ENCODE measurements at regions of chr19 and their contacts with region 1.

Region 1: GRCh38 chr19:19865739-19866481 is at the start of gene ZNF253:
- DNase-seq: peak; percentile 93 to 95
- H3K4me3 ChIP-seq: peak within 1 kb of the TSS; percentile 70
- H3K4me3 Mint-ChIP-seq: peak within 1 kb of the TSS; percentile 100
- H3K27ac Mint-ChIP-seq: peak within 1 kb of the TSS; percentile 100
- H3K4me1 ChIP-seq: no peaks in the 10 kb centered on the region
- H3K4me1 Mint-ChIP-seq: peaks cover 8% of the 10 kb centered on the region
- H3K27me3 ChIP-seq: no peaks in the 10 kb centered on the region
- H3K27me3 Mint-ChIP-seq: no peaks in the 10 kb centered on the region
- CTCF ChIP-seq: no peak
- total RNA-seq, gene ZNF253: 6.4 and 7.1 TPM in 2 replicates

Region 2: DNA sequence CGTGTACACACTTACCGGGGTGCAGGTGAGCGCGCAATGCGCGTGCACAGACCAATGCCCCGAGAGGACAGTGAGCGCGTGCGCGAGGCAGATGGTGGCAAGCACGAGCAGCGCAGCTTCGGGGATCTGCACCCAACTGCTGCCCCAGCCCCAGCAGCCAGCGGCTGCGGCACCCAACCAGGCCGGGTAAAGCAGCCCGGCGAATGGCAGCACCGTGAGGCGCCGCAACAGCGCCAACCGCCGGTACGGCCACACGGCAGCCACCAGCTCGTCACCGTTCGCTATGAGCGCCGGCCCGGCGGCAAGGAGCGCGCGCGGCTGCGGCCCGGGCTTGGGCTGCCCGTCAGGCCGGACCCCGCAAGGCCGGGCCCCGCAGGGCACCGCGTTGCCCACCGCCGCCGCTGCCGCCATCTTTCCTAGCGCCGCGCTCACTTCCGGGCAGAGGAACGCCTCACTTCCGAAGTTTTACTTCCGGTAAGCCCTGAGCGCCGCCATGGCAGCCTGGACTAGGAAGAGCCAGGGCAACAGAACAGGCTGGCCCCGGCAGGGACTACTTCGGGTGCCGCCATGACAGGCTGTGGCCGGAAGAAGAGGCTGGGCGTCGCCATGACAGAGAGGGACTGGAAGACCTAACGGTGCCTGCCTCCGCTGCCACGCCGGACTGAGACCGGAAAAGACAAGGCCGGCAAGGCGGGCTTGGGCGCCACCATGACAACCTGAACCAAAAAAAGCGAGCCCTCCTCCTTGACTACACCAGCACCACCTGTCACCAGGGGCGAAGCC is 202.5 kb before region 1 on chr19 and contains the start of gene ATP13A1:
- CTCF ChIA-PET with region 1: no interaction called
- POLR2A ChIA-PET with region 1: interaction called, 10 read pairs
- intact Hi-C with region 1: loop called (anchors 10 kb)
- DNase-seq: peak; percentile 93 to 97
- H3K4me3 ChIP-seq: peak within 1 kb of the TSS; percentile 99
- H3K4me3 Mint-ChIP-seq: peak within 1 kb of the TSS; percentile 82
- H3K27ac Mint-ChIP-seq: peak within 1 kb of the TSS; percentile 93
- H3K4me1 ChIP-seq: no peaks in the 10 kb centered on the region; the same call in 1 of the 2 replicates
- H3K4me1 Mint-ChIP-seq: no peaks in the 10 kb centered on the region
- H3K27me3 ChIP-seq: no peaks in the 10 kb centered on the region
- H3K27me3 Mint-ChIP-seq: no peaks in the 10 kb centered on the region
- CTCF ChIP-seq: no peak
- total RNA-seq, gene ATP13A1: 83.0 and 93.1 TPM in 2 replicates

Region 3: DNA sequence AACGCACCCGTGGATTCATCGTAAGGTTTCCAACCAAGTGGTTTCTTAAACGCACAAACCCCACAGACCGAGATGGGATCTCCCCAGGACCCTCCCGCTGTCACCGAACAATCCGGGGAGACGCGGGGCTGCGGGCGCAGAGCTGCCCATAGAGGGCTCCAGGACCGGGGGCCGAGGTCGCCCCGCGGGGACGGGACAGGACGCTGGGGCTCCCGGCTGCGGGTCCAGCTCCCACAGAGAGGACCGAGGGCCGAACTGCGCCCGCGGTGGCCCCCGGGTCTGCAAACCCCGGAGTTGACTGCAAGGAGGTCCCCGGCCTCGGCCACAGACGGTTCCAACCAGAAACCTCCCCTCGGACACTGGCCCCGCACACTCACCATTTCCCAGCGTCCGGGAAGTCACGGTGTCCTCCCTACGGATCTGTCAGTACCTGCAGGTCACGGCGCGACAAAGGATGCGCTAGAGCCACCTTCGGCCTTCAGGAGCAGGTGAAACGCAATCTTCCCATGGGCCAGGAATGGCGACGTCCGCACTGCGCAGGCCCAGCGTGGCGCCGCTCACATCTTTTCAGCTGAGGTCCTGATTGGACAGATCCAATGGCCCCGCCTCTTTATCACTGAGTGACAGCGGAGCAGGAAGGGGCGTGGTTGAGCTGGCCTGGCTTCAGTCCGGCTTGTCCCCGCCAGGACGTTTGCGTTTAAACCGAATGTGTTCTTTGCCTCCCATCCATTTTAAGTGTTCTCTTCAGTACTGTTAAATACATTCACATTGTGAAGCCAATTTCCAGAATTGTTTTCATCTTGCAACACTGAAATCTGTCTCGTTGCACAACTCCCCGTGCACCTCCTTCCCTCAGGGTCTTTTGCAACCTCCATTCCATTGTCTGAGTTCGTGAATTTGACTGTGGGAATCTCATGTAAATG is 133.1 kb before region 1 on chr19 and contains the start of gene ZNF14:
- CTCF ChIA-PET with region 1: no interaction called
- POLR2A ChIA-PET with region 1: interaction called, 11 read pairs
- intact Hi-C with region 1: no loop called
- DNase-seq: peak; percentile 96 to 97
- H3K4me3 ChIP-seq: peak within 1 kb of the TSS; percentile 98
- H3K4me3 Mint-ChIP-seq: peak within 1 kb of the TSS; percentile 90
- H3K27ac Mint-ChIP-seq: peak within 1 kb of the TSS; percentile 82
- H3K4me1 ChIP-seq: no peaks in the 10 kb centered on the region; the same call in 1 of the 2 replicates
- H3K4me1 Mint-ChIP-seq: no peaks in the 10 kb centered on the region
- H3K27me3 ChIP-seq: no peaks in the 10 kb centered on the region
- H3K27me3 Mint-ChIP-seq: no peaks in the 10 kb centered on the region
- CTCF ChIP-seq: peak; percentile 20 to 32
- total RNA-seq, gene ZNF14: 4.5 and 4.9 TPM in 2 replicates

Region 4: DNA sequence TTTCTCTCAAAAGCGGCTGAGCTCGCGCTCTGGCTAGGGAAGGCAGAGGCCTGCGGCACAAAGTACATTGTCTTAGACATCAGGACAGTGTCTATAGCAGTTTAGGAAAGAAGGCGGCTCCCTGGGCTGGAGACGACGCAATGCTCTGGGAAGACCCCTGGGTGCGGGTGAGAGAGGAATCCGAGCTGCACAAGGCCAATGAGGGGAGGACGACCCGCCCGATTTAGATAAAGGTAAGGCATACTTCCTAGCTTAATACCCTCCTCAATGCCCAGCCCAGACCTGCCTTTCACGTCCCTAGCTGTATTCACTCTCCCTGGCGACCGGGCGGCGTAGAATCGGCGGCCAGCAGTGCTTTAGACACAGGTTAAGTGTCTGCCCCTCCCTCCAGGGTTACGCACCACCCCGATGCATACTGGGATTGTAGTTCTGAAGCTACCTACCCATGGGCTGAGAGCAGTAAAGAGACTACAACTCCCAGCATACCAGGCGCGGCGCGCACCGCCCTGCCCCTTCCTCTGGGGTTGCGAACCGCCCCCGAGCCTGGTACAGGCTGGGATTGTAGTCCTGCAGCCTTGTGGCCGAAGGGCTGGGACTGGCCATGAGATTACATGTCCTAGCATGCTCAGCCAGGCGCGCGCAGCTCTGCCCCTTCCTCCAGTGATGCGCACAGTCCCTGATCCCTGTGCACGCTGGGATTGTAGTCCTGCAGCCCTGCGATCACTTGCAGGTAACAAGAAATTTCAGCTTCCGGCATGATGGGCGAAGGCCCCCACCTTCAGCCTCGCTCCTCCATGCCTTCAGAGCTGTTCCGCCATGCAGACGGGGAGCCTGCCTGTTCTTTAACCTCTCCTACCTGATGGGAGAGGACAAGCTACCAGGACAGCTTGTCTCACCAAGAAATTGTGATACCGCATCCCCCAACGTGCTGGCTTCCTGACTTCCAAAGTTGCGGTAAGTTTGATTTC is 89.6 kb before region 1 on chr19:
- CTCF ChIA-PET with region 1: no interaction called
- POLR2A ChIA-PET with region 1: interaction called, 25 read pairs
- intact Hi-C with region 1: loop called (anchors 2 kb)
- DNase-seq: peak; percentile 99
- H3K4me3 ChIP-seq: peak overlapping the region; percentile 72
- H3K4me3 Mint-ChIP-seq: peak overlapping the region; percentile 98
- H3K27ac Mint-ChIP-seq: peak overlapping the region; percentile 95
- H3K4me1 ChIP-seq: peaks cover 12% of the 10 kb centered on the region
- H3K4me1 Mint-ChIP-seq: peaks cover 17% of the 10 kb centered on the region
- H3K27me3 ChIP-seq: no peaks in the 10 kb centered on the region
- H3K27me3 Mint-ChIP-seq: no peaks in the 10 kb centered on the region
- CTCF ChIP-seq: no peak

Region 5: DNA sequence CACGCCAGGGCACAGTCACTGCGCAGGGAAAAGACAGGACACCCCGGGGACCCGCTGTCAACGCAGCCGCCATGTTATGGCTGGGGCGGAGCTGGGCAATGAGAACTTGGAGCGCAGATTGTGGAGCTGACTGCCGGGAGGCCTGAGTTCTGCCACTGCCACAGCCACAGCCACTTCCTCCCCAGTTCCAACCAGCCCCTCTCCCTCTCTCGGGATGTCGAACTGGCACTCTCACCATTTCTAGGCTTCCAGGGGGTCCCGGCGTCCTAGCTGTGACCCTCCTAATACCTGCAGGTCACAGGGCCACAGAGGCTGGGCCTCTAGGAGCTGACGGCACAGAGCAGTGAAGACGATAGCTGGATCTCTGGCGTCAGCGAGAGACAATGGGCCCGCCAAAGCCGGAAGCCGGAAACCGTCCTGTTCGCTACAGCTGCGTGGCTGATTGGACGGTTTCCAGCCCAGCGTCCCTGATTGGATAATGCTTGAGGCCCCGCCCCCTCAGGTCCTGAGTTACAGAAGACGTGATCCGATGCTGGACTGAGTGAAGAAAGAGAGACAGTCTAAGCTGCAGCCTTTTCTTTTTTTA is 44.5 kb before region 1 on chr19 and contains the start of gene ZNF506:
- CTCF ChIA-PET with region 1: no interaction called
- POLR2A ChIA-PET with region 1: interaction called, 7 read pairs
- intact Hi-C with region 1: loop called (anchors 1 kb)
- DNase-seq: peak; percentile 85 to 91
- H3K4me3 ChIP-seq: peak within 1 kb of the TSS; percentile 66
- H3K4me3 Mint-ChIP-seq: peak within 1 kb of the TSS; percentile 77
- H3K27ac Mint-ChIP-seq: peak within 1 kb of the TSS; percentile 85
- H3K4me1 ChIP-seq: no peaks in the 10 kb centered on the region
- H3K4me1 Mint-ChIP-seq: no peaks in the 10 kb centered on the region
- H3K27me3 ChIP-seq: no peaks in the 10 kb centered on the region
- H3K27me3 Mint-ChIP-seq: no peaks in the 10 kb centered on the region
- CTCF ChIP-seq: no peak
- total RNA-seq, gene ZNF506: 8.1 and 9.4 TPM in 2 replicates

Region 6: DNA sequence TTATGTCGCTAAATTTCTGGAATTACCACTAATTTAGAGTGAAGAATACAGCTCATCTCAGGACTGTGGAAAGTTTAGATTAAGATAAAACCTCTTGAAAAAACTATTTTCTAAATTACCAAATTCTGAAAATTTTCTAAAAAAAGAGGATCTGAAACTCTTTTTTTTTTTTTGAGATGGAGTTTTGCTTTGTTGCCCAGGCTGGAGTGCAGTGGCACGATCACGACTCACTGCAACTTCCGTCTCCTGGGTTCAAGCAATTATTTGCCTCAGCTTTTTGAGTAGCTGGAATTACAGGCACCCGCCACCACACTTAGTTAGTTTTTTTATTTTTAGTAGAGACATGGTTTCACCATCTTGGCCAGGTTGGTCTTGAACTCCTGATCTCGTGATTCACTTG is 16.9 kb before region 1 on chr19:
- CTCF ChIA-PET with region 1: no interaction called
- POLR2A ChIA-PET with region 1: no interaction called
- intact Hi-C with region 1: no loop called
- DNase-seq: no peak
- H3K4me3 ChIP-seq: no peak overlapping the region
- H3K4me3 Mint-ChIP-seq: no peak overlapping the region
- H3K27ac Mint-ChIP-seq: no peak overlapping the region
- H3K4me1 ChIP-seq: no peaks in the 10 kb centered on the region
- H3K4me1 Mint-ChIP-seq: no peaks in the 10 kb centered on the region
- H3K27me3 ChIP-seq: no peaks in the 10 kb centered on the region
- H3K27me3 Mint-ChIP-seq: no peaks in the 10 kb centered on the region
- CTCF ChIP-seq: no peak

Region 7: GRCh38 chr19:19900729-19901444 is 35.0 kb after region 1 on chr19 and contains the start of gene ZNF93:
- CTCF ChIA-PET with region 1: interaction called, 4 read pairs
- POLR2A ChIA-PET with region 1: interaction called, 15 read pairs
- intact Hi-C with region 1: loop called (anchors 1 kb)
- DNase-seq: peak; percentile 94 to 96
- H3K4me3 ChIP-seq: peak within 1 kb of the TSS; percentile 64
- H3K4me3 Mint-ChIP-seq: peak within 1 kb of the TSS; percentile 98
- H3K27ac Mint-ChIP-seq: peak within 1 kb of the TSS; percentile 97
- H3K4me1 ChIP-seq: peaks cover 5% of the 10 kb centered on the region; the same call in 1 of the 2 replicates
- H3K4me1 Mint-ChIP-seq: no peaks in the 10 kb centered on the region
- H3K27me3 ChIP-seq: no peaks in the 10 kb centered on the region
- H3K27me3 Mint-ChIP-seq: no peaks in the 10 kb centered on the region
- CTCF ChIP-seq: no peak
- total RNA-seq, gene ZNF93: 6.3 and 7.5 TPM in 2 replicates

Region 8: GRCh38 chr19:20182222-20182785 is 316.4 kb after region 1 on chr19:
- CTCF ChIA-PET with region 1: no interaction called
- POLR2A ChIA-PET with region 1: no interaction called
- intact Hi-C with region 1: no loop called
- DNase-seq: no peak
- H3K4me3 ChIP-seq: no peak overlapping the region
- H3K4me3 Mint-ChIP-seq: no peak overlapping the region
- H3K27ac Mint-ChIP-seq: no peak overlapping the region
- H3K4me1 ChIP-seq: no peaks in the 10 kb centered on the region
- H3K4me1 Mint-ChIP-seq: no peaks in the 10 kb centered on the region
- H3K27me3 ChIP-seq: no peaks in the 10 kb centered on the region
- H3K27me3 Mint-ChIP-seq: no peaks in the 10 kb centered on the region
- CTCF ChIP-seq: no peak